Posterior vena cava (tissue), 2 donors: ENCODE measurements at regions of chrX and their contacts with region 1.

Region 1: GRCh38 chrX:17788439-17788838 is 51.1 kb downstream of the SCML1 start:
- DNase-seq: no peak

Region 2: GRCh38 chrX:17750436-17750835 is 38.0 kb before region 1 on chrX:
- intact Hi-C with region 1: no loop called
- DNase-seq: no peak

Region 3: DNA sequence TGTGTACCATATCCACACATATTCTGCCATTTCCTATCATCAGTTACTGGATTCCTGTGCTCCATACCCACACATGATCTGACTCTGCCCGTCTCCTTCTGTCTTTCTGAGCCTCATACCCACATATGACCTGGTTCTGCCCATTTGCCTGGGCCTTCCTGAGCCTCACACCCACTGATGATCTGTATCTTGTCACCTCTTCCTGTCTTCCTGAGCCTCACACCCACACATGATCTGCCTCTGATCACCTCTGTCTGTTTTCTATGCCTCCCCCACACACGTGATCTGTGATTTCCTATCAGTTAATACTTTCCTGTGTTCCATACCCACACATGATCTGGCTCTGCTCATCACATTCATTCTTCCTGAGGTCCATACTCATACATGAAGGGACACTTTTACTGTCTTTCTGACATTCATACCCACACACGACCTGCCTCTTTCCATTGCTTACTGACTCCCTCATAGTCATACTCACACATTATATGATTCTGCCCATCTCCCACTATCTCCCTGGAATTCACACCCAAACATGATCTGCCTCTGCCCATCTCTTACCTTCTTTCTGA is 18.7 kb before region 1 on chrX:
- intact Hi-C with region 1: no loop called
- DNase-seq: no peak

Region 4: DNA sequence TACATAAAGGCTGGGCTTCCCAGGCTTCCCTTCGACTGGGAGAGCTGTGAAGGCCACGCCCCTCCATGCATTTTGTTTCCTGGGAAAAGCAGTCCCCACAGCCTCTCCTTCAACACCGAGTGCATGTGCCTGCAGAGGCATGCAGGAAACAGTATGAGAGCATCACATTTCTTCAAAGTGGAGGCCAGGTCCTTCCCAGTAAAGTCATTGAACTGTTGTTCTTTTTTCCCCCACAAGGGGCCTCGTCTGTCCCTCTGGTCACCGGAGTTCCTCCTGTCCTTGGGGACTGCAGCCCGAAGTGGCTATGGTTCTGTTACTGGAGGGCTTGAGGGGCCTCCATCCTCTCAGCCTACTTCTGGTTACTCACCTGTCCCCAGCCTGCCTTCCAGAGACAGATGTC is 16.7 kb after region 1 on chrX:
- intact Hi-C with region 1: no loop called
- DNase-seq: no peak

Region 5: GRCh38 chrX:17860811-17861488 is 72.5 kb after region 1 on chrX and contains the start of gene RAI2:
- intact Hi-C with region 1: no loop called
- DNase-seq: no peak
- total RNA-seq, gene RAI2: 32.5 to 33.8 TPM

Region 6: DNA sequence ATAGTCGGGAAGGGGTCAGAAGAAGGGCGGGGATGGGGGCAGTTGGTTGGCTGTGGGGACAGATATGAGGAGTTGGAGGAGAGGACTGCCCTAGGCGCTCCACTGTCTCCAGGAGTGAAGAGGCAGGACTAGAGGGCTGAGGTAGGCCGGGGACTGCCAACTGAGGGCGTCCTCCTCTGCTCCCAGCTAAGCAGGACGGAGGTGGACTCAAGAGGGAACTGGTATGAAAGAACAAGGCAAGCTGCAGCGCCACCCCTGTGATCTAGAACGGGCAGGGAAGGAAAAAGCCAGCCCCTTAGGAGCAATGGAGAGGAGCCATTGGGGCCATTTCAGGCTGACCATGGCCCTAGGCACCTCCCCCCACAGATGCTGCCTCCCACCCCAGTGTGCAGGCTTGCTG is 418.2 kb after region 1 on chrX:
- intact Hi-C with region 1: loop called in 1 of 2 experiments (anchors 5 kb)
- DNase-seq: no peak